ENCODE measurements at regions of chr5 and their contacts with region 1.

Region 1: GRCh38 chr5:31825518-31826068 is 186.7 kb downstream of the PDZD2 start:
- DNase-seq: peak; percentile 12
- H3K4me3 Mint-ChIP-seq: no peak overlapping the region
- H3K27ac Mint-ChIP-seq: no peak overlapping the region
- H3K4me1 Mint-ChIP-seq: no peaks in the 10 kb centered on the region
- H3K27me3 Mint-ChIP-seq: peaks cover 5% of the 10 kb centered on the region

Region 2: DNA sequence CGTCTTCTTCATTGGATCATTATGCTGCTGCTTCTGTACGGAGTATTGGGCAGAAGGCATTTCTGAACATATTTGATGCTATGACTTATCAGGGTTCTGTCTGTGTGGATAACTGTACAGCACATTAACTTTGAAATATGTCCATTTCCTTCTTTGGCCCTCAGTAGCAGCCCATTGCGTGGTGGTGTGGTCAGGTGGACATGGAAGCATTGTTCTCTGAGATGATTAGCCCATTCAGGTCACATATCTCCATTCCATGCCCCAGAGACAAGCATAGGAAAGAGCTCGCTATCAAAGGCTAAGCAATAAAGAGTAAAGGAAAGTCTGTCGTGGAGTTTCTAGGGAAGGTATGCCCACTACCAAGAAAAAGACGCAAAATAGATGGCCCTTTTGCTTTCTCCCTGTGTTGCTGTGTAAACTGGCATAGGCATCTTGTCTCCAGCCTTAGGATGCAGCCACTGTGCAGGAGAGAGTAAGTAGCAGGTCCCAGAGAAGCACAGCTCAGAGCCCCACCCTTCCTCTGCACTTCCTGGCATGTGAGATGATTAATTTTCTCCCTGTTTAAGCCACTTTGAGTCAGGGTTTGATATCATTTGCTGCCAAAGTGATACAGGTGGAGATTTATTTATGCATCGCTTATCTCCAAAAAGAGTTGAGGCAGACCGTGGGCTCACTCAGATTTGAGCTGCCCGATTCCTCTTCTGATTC is 35.3 kb after region 1 on chr5:
- intact Hi-C with region 1: no loop called
- DNase-seq: no peak
- H3K4me3 Mint-ChIP-seq: no peak overlapping the region
- H3K27ac Mint-ChIP-seq: no peak overlapping the region
- H3K4me1 Mint-ChIP-seq: no peaks in the 10 kb centered on the region
- H3K27me3 Mint-ChIP-seq: peaks cover 12% of the 10 kb centered on the region

Region 3: DNA sequence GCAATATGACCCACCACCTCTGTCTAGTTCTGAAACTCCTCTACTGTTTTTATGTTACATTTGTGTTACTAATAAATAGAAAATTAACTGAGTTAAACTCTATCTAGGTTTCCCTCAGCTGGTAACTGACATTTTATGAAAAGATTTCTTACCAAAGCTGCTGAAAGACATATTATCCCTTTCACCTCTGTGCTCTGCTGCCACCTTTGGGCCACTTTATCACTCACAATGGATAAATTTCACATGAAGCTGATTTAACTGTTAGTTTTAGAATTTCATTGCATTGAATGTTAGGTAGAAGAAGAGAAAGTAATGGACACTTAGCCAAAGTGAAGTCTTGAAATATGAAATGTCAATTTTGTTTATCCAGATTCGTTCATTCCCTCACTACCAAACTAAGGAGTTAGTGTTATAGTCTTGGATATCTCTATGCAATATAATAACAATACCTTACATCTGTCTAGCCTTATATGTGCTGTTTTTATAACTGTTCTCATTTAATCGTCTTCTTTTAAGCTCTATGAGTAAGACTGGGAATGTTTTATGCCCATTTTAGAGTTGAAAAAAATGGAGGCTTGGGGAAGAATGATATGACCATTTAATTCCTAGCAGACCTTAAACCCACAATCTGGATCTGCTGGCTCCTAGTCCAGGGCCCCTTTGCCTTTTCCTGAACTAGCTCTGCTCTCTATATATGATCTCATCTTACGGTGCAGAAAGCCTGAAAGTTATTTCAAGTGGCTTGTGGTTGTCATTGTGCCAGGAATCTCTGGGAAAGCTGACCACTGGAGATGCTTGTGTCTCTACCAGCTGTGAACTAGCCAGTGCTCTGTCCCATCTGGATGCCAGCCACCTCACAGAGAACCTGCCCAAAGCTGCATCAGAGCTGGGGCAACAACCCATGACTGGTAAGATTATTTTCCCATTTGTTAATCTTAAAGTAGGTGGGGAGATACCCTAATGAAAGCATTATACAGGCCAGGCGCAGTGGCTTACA is 251.4 kb after region 1 on chr5:
- intact Hi-C with region 1: loop called (anchors 2 kb)
- DNase-seq: no peak
- H3K4me3 Mint-ChIP-seq: no peak overlapping the region
- H3K27ac Mint-ChIP-seq: no peak overlapping the region
- H3K4me1 Mint-ChIP-seq: no peaks in the 10 kb centered on the region
- H3K27me3 Mint-ChIP-seq: no peaks in the 10 kb centered on the region

Region 4: DNA sequence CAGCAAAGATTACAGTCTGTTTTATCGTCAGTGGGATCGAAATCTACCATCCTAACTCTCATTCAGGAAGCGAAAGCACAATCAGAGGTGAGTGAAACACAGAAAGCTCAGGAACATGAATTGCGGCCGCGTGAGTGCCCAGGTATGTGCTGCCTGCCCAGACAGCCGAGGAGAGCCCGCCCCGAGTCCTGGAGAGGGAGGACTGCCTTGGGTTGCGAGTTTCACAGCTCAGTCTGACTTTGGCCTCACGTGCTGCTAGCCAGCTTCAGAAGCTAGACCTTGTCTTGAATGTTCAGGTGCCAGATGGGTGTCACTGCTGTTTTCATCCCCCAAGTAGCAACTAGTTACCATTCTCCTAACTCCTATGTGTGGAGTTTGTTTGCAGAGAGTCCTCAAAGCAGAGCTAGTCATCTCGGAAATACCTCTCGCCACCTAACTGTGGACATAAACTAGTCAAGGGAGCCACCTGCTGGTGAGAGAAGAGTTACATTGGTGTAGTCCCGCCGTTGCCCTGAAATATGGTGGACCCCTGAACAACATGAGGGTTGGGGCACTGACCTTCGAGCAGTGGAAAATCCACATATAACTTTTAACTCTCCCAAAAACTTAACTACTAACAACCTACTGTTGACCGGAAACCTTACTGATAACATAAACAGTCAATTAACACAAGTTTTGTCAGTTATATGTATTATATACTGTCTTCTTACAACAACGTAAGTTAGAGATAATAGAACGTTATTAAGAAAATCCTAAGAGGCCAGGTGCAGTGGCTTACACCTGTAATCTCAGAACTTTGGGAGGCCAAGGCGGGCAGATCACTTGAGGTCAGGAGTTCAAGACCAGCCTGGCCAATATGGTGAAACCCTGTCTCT is 267.6 kb after region 1 on chr5:
- intact Hi-C with region 1: loop called (anchors 5 kb)
- DNase-seq: peak; percentile 42
- H3K4me3 Mint-ChIP-seq: no peak overlapping the region
- H3K27ac Mint-ChIP-seq: no peak overlapping the region
- H3K4me1 Mint-ChIP-seq: no peaks in the 10 kb centered on the region
- H3K27me3 Mint-ChIP-seq: no peaks in the 10 kb centered on the region

Region 5: DNA sequence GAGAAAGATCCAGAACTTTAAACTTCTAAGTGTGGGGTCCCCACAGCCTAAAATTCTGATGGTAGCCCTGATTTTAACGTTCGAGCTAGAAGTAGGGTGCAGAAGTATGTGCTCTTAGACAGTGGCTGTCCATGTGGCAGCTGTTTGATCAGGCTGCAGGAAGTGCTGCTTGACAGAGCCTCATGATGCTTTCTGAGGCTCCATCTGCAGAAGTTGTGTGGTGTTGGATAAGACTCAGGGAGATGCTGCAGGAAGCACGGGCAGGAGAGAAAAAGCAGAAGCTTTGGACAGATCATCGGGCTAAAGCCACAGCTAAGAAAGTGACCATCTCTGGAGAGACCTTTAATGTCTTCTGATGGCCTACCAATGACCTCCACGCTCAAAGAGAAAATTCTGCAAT is 479.0 kb after region 1 on chr5:
- intact Hi-C with region 1: no loop called
- DNase-seq: no peak
- H3K4me3 Mint-ChIP-seq: no peak overlapping the region
- H3K27ac Mint-ChIP-seq: no peak overlapping the region
- H3K4me1 Mint-ChIP-seq: peaks cover 32% of the 10 kb centered on the region
- H3K27me3 Mint-ChIP-seq: no peaks in the 10 kb centered on the region

Measured in activated T-helper 2 cell treated with anti-CD3 and anti-CD28 coated beads, Interferon-gamma antibody, Interleukin-2, Interleukin-4, amounts not matched to agents 10 μg/mL and 5 μg/mL and 100 μg/mL, durations not matched to agents 14 hours and 24 hours and 36 hours (primary cell).